ENCODE measurements at regions of chr5 and their contacts with region 1.

Region 1: GRCh38 chr5:92552206-92553160 is 1028.5 kb downstream of the NR2F1-AS1 start:
- DNase-seq: peak; percentile 88
- ATAC-seq: peak; percentile 86
- H3K4me3 ChIP-seq: no peak overlapping the region
- H3K27ac ChIP-seq: peak overlapping the region; percentile 92
- H3K4me1 ChIP-seq: peaks cover 8% of the 10 kb centered on the region
- H3K27me3 ChIP-seq: no peaks in the 10 kb centered on the region
- CTCF ChIP-seq: no peak

Region 2: GRCh38 chr5:92329759-92330158 is 222.7 kb before region 1 on chr5:
- CTCF ChIA-PET with region 1: no interaction called
- POLR2A ChIA-PET with region 1: no interaction called
- intact Hi-C with region 1: loop called (anchors 2 kb)
- DNase-seq: no peak
- ATAC-seq: no peak
- H3K4me3 ChIP-seq: no peak overlapping the region
- H3K27ac ChIP-seq: no peak overlapping the region; the same call in 1 of the 2 replicates
- H3K4me1 ChIP-seq: peaks cover 23% of the 10 kb centered on the region
- H3K27me3 ChIP-seq: no peaks in the 10 kb centered on the region
- CTCF ChIP-seq: no peak

Region 3: DNA sequence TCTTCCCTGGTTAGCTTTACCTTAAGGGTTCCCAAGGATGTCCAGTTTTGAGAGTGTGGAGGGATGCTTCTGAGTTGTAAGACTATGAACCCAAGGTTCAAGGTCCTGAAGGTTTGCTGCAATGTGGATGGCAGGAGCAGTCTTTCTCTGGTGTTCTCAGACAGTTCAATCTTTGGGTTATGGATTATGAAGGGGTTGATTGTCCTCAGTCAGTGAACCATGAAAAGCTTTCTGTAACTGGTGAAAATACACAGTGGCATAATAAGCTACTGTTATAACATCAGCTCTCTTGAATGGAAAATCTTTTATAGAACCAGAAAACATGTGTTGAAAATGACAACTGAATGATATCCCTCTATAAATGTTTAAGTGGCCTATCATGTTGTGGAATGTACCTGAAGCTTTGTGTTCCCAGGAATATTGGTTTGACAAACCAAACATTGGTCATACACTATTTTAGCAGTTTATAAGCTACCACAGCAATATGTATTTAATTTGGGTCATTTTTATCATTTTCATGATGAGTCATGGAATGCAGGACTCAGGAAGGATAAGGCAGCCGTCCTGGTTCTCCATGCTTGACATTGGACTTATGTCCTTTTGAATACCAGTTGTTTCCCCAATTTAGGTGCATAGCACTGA is 127.6 kb before region 1 on chr5:
- CTCF ChIA-PET with region 1: no interaction called
- POLR2A ChIA-PET with region 1: no interaction called
- intact Hi-C with region 1: loop called (anchors 2 kb)
- DNase-seq: peak; percentile 60
- ATAC-seq: peak; percentile 92
- H3K4me3 ChIP-seq: no peak overlapping the region
- H3K27ac ChIP-seq: peak overlapping the region; percentile 95
- H3K4me1 ChIP-seq: no peaks in the 10 kb centered on the region; the same call in 1 of the 2 replicates
- H3K27me3 ChIP-seq: no peaks in the 10 kb centered on the region
- CTCF ChIP-seq: no peak

Region 4: GRCh38 chr5:92518318-92518904 is 34.1 kb before region 1 on chr5:
- CTCF ChIA-PET with region 1: no interaction called
- POLR2A ChIA-PET with region 1: no interaction called
- intact Hi-C with region 1: loop called (anchors 1 kb)
- DNase-seq: peak; percentile 58
- ATAC-seq: peak; percentile 85
- H3K4me3 ChIP-seq: no peak overlapping the region
- H3K27ac ChIP-seq: no peak overlapping the region
- H3K4me1 ChIP-seq: no peaks in the 10 kb centered on the region; the same call in 1 of the 2 replicates
- H3K27me3 ChIP-seq: no peaks in the 10 kb centered on the region
- CTCF ChIP-seq: peak; percentile 73

Region 5: GRCh38 chr5:92580814-92581213 is 28.3 kb after region 1 on chr5:
- CTCF ChIA-PET with region 1: no interaction called
- POLR2A ChIA-PET with region 1: no interaction called
- intact Hi-C with region 1: no loop called
- DNase-seq: peak; percentile 8
- ATAC-seq: no peak
- H3K4me3 ChIP-seq: no peak overlapping the region
- H3K27ac ChIP-seq: no peak overlapping the region
- H3K4me1 ChIP-seq: no peaks in the 10 kb centered on the region
- H3K27me3 ChIP-seq: no peaks in the 10 kb centered on the region
- CTCF ChIP-seq: no peak

Region 6: GRCh38 chr5:92641031-92641962 is 88.8 kb after region 1 on chr5:
- CTCF ChIA-PET with region 1: no interaction called
- POLR2A ChIA-PET with region 1: no interaction called
- intact Hi-C with region 1: loop called (anchors 1 kb)
- DNase-seq: peak; percentile 77
- ATAC-seq: peak; percentile 96
- H3K4me3 ChIP-seq: peak overlapping the region; percentile 58
- H3K27ac ChIP-seq: peak overlapping the region; percentile 72
- H3K4me1 ChIP-seq: 0 out of 2 replicates have a peak, but pooled peaks cover 5% of the 10 kb centered on the region
- H3K27me3 ChIP-seq: no peaks in the 10 kb centered on the region
- CTCF ChIP-seq: no peak

Region 7: DNA sequence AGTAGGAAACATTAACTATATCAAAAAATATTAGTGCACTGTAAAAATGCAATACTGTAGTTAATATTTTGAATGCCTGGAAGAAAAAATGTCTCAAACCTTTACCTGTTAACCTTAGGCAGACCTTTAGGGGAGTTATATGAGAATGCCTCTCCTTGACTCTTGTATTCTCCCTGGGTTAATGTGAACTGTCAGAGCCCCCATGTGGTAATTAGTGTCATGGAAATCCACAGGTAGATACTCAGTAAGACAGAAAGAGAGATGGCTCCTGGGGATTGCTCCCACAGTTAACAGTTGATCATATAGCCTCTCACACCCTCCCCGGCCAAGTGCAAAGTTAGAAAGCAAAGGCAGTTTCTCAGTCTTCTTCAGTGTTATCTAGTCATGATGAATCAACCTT is 285.8 kb after region 1 on chr5:
- CTCF ChIA-PET with region 1: no interaction called
- POLR2A ChIA-PET with region 1: no interaction called
- intact Hi-C with region 1: loop called (anchors 1 kb)
- DNase-seq: peak; percentile 52
- ATAC-seq: peak; percentile 17; the same call in 1 of the 2 replicates
- H3K4me3 ChIP-seq: no peak overlapping the region
- H3K27ac ChIP-seq: peak overlapping the region; percentile 83
- H3K4me1 ChIP-seq: peaks cover 29% of the 10 kb centered on the region
- H3K27me3 ChIP-seq: no peaks in the 10 kb centered on the region
- CTCF ChIP-seq: peak; percentile 62